Cardiac septum (tissue), 1 donor: ENCODE measurements at regions of chr6 and their contacts with region 1.

Region 1: DNA sequence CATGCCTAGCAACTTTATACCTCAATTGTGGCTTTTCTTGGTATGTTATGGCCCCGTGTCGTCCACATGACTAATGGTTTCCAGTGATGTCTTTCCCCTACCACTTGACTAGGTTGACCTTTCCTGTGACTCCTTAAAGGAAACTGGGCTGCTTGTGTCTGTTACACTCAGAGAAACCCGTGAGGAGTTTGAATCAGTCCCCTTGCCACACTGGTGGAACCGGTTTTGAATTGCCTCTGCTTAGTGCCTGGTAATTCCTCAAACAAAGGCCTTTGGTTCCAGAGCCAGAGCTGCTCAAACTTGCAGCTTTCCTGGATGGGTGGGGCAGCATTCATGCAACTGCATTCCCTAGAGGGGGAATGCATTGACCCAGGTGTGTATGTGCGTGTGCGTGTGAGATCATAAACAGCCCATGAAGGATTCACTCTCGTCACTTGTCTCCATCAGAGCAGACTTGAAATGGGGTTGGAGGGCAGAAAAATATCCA is 22.0 kb downstream of the ECT2L start:
- DNase-seq: no peak

Region 2: DNA sequence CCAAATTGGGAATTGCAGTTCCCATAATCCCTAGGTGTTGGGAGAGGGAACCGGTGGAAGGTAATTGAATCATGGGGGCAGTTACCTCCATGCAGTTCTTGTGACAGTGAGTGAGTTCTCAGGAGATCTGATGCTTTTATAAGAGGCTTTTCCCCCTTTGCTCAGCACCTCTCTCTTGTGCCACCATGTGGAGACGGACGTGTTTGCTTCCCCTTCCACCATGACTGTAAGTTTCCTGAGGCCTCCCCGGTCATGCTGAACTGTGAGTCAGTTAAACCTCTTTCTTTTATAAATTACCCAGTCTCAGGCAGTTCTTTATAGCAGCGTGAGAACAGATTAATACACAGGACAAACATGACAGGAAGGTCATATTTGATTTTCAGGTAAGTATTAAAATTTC is 291.7 kb after region 1 on chr6:
- intact Hi-C with region 1: loop called (anchors 10 kb)
- DNase-seq: no peak